ENCODE measurements at regions of chr20 and their contacts with region 1.

Region 1: DNA sequence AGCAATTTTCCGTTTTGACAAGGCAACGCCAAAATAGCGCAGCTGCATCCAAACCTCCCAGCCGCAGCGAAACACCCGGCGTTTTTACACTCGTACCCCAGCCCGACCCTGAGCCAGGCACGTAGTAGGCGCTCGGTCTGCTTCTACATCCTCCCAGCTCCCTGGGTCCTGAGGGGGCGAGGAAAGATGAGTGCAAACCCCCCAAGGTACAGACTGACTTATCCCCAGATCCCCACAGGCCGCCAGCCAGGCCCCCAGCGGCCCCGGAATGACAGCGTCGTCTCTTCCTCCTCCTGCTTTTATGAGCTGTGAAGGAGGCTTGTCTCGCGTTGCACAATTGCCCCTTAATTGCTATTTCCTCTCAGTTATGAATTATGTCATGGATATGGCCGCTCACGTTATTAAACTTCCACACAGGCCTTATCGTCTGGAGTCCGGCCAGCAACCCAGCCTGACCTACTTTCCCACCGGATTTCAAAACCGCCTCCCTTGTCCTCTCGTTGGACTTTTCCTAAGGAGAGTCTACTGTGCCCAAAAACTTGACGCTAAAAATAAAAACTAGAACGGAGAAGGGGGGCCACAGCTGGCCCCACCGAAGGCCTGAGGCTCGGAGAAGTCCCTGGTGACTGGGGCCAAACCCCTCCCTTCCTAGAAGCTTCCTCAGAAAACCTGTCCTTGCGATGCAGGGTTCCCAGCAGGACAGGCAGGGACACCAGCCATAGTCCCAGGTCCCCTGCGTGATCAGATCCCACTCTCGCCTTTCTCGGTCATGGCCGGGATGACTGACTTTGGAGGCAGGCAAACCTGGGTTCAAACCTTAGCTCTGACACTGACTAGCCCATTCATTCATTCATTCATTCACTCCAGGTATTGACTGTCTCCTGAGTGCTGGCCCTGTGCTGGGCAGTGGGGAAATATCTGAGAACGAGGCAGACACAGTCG is 130.9 kb upstream of the PTPN1 start:
- DNase-seq: peak; percentile 76
- H3K4me3 ChIP-seq: no peak overlapping the region
- H3K27ac ChIP-seq: peak overlapping the region; percentile 73 to 80
- H3K4me1 ChIP-seq: peaks cover 8% of the 10 kb centered on the region
- H3K27me3 ChIP-seq: no peaks in the 10 kb centered on the region
- CTCF ChIP-seq: no peak
- POLR2A ChIP-seq: no peak

Region 2: DNA sequence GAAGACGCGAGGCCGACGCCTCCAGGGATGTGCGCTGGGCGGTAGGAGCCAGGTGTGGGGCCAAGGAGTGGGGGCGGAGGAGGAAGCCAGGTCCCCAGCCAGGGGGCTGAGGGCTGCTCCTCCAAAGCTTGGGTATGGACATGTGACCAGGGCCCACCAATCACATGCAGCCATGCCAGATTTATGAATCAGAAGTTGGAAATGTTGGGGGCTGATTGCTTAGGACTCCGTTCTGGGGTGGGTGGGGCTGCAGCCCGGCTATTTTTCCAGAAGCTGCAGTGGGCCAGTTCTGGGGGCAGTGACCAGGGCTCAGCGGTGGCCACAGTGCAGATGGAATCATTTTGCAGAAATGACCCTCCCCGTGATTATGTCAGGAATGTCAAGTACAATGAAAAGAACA is 92.7 kb before region 1 on chr20:
- intact Hi-C with region 1: loop called (anchors 5 kb)
- DNase-seq: no peak
- H3K4me3 ChIP-seq: no peak overlapping the region
- H3K27ac ChIP-seq: peak overlapping the region; percentile 71 to 84
- H3K4me1 ChIP-seq: no peaks in the 10 kb centered on the region
- H3K27me3 ChIP-seq: no peaks in the 10 kb centered on the region
- CTCF ChIP-seq: no peak
- POLR2A ChIP-seq: no peak

Region 3: GRCh38 chr20:50308513-50309279 is 70.6 kb before region 1 on chr20:
- intact Hi-C with region 1: loop called (anchors 2 kb)
- DNase-seq: peak; percentile 70
- H3K4me3 ChIP-seq: no peak overlapping the region
- H3K27ac ChIP-seq: peak overlapping the region; percentile 82 to 83
- H3K4me1 ChIP-seq: peaks cover 14% of the 10 kb centered on the region
- H3K27me3 ChIP-seq: no peaks in the 10 kb centered on the region
- CTCF ChIP-seq: peak in 1 of 4 experiments; percentile 12
- POLR2A ChIP-seq: peak; percentile 45

Region 4: DNA sequence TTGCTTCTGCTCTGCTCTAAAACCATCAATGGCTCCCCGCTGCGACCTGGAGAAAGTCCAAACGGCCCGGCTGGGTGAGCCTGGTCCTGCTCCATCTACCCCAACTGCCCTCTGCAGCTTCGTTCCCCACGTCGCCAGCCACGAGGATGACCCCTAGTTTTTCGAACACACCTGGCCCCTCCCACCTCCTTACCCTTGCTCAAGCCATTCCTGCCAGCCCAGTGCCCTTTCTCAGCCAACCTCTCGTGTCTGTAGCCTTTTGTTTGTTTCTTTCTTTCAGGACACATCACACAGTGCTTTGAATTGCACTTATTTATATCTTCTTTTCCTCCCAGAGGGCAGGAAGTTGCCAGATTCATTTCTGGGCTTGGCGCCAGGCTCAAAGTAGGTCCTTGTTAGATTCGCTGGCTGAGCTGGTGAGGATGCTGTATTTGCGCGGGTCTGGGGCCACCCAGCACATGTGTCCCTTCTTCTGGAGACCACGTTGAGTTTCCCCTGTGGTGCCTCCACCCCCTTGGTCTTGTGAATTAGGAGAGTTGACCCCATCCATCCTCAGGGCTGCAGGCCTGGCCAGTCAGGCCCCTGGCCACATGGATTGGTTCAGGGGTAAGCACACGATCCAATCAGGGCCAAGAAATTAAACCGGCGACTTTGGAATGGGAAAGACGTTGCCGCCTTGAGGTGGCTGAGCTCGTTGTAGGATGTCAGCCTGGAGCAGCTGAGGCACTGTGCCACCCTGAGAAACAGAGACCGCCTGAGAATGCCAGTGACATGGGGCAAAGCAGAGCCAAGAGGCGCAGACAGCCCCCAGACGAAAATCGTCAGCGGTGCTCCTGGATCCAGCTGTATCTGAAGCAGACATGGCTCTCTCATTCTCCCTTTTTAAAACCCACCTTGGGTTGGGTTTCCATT is 32.7 kb before region 1 on chr20:
- intact Hi-C with region 1: loop called (anchors 1 kb)
- DNase-seq: peak; percentile 84
- H3K4me3 ChIP-seq: no peak overlapping the region
- H3K27ac ChIP-seq: peak overlapping the region; percentile 68 to 75
- H3K4me1 ChIP-seq: peaks cover 10% of the 10 kb centered on the region
- H3K27me3 ChIP-seq: no peaks in the 10 kb centered on the region
- CTCF ChIP-seq: no peak
- POLR2A ChIP-seq: no peak

Region 5: GRCh38 chr20:50438986-50439407 is 59.7 kb after region 1 on chr20:
- intact Hi-C with region 1: no loop called
- DNase-seq: no peak
- H3K4me3 ChIP-seq: no peak overlapping the region
- H3K27ac ChIP-seq: no peak overlapping the region
- H3K4me1 ChIP-seq: no peaks in the 10 kb centered on the region
- H3K27me3 ChIP-seq: no peaks in the 10 kb centered on the region
- CTCF ChIP-seq: no peak
- POLR2A ChIP-seq: peak; percentile 31

Region 6: DNA sequence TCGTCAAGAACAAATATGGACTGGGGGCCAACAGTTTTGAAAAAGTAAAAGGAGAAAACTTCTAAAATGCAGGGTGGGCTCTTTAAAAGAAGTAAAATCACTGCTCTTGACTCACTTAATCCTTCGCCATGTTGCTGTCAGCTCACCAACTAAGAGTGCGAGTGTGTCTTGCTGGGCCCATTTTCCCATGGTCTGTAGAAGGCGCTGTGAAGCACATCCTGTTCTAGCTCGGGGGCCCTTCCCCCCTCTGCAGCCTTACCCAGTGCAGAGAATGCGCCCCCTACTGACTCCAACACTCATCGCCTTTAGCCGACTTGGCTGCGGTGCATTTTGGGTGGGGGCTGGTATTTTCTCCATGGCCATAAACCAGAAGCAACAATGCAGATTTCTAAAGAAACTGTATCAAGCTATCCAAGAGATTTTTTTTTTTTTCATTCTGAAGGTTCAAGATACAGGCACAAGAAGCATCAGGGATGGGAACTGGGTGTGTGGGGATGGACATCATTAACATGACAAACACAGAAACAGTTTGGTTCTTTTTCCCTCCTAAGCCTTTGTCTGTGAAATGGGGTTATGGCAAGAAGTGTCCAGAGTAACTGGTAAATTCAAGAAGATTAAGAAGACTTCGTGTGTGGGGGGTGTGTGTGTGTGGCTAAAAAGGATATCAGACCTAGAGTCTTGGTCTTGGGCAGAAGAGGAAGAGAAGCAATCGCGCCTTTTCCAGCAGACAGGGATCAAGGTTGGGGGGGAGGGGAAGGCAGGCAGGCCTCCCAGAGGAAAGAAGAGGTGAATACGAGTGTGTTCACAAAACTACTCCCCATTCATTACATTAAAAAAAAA is 550.2 kb after region 1 on chr20:
- intact Hi-C with region 1: no loop called
- DNase-seq: peak; percentile 91
- H3K4me3 ChIP-seq: peak overlapping the region; percentile 78 to 89
- H3K27ac ChIP-seq: peak overlapping the region; percentile 69 to 98
- H3K4me1 ChIP-seq: peaks cover 5% of the 10 kb centered on the region
- H3K27me3 ChIP-seq: no peaks in the 10 kb centered on the region
- CTCF ChIP-seq: peak; percentile 70 to 93 (median 84)
- POLR2A ChIP-seq: no peak